ENCODE measurements at regions of chr3 and their contacts with region 1.

Region 1: GRCh38 chr3:160027541-160028195 is 39.0 kb downstream of the IL12A start:
- DNase-seq: peak; percentile 21
- ATAC-seq: peak; percentile 88
- H3K4me3 Mint-ChIP-seq: no peak overlapping the region
- H3K27ac Mint-ChIP-seq: peak overlapping the region; percentile 43
- H3K4me1 Mint-ChIP-seq: peaks cover 11% of the 10 kb centered on the region
- H3K27me3 Mint-ChIP-seq: peaks cover 2% of the 10 kb centered on the region
- CTCF ChIP-seq: no peak

Region 2: DNA sequence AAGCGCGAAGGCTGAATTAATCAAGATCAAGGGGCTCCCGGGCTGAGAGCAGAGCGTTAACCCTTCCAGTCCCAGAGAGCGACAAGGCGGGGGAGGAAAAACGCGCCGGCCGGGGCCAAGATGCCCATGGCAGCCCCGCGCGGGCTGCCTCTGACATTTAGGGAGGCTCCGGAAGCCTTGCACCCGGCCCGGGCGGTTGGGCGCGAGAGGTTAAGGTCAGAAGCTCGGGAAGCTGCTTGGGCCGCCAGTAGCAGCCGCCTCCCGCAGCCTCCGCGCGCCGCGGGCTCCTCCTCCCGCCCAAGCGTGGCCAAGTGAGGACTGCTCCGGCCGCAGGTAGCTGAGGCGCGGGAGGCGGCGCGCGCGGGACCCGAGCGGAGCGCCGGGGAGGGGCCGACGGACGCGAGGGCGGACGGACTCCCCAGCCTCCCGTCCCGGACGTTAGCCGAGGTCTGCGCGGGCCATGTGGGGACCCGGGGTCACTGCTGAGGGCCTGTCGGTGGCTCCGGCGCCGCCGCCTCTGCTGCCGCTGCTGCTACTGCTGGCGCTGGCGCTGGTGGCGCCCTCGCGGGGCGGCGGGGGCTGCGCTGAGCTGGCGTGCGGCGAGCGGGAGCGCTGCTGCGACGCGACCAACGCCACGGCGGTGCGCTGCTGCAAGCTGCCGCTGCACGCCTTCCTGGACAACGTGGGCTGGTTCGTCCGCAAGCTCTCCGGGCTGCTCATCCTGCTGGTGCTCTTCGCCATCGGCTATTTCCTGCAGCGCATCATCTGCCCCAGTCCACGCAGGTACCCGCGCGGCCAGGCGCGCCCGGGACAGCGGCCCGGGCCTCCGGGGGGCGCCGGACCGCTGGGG is 197.7 kb after region 1 on chr3 and contains the start of gene C3orf80:
- CTCF ChIA-PET with region 1: no interaction called
- POLR2A ChIA-PET with region 1: no interaction called
- intact Hi-C with region 1: no loop called
- DNase-seq: peak; percentile 63
- ATAC-seq: peak; percentile 91
- H3K4me3 Mint-ChIP-seq: peak within 1 kb of the TSS; percentile 63
- H3K27ac Mint-ChIP-seq: no peak within 1 kb of the TSS
- H3K4me1 Mint-ChIP-seq: peaks cover 10% of the 10 kb centered on the region
- H3K27me3 Mint-ChIP-seq: peaks cover 56% of the 10 kb centered on the region
- CTCF ChIP-seq: no peak
- total RNA-seq, gene C3orf80: 0.09 to 0.13 TPM

Region 3: DNA sequence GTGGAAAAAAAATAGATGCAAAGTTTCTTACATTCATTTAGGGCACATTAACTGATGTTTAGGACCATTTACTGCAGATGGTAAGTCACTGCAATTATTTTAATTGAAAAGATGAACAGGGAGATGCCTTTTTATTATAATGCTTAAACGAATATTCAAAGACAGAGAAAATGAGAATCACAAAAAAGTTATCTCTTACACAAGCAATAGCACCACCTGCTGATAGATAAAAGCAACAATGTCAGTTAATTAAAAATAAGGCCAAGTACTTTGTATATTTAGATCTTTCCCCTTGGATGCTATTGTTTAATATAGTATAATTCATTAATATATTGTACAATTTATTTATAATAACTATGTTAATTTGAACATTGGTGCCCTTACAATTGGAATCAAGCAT is 315.5 kb after region 1 on chr3:
- CTCF ChIA-PET with region 1: interaction called, 5 read pairs
- POLR2A ChIA-PET with region 1: no interaction called
- intact Hi-C with region 1: loop called (anchors 5 kb)
- DNase-seq: no peak
- ATAC-seq: no peak
- H3K4me3 Mint-ChIP-seq: no peak overlapping the region
- H3K27ac Mint-ChIP-seq: no peak overlapping the region
- H3K4me1 Mint-ChIP-seq: no peaks in the 10 kb centered on the region
- H3K27me3 Mint-ChIP-seq: no peaks in the 10 kb centered on the region
- CTCF ChIP-seq: peak; percentile 43